ENCODE measurements at regions of chr18 and their contacts with region 1.

Region 1: GRCh38 chr18:50356036-50356945 is 18.6 kb upstream of the SKA1 start:
- DNase-seq: no peak
- H3K4me3 ChIP-seq: no peak overlapping the region
- H3K27ac ChIP-seq: no peak overlapping the region
- H3K27me3 ChIP-seq: peaks cover 2% of the 10 kb centered on the region
- CTCF ChIP-seq: no peak

Region 2: GRCh38 chr18:50203801-50204604 is 152.3 kb before region 1 on chr18:
- CTCF ChIA-PET with region 1: interaction called, 14 read pairs
- POLR2A ChIA-PET with region 1: no interaction called
- DNase-seq: no peak
- H3K4me3 ChIP-seq: no peak overlapping the region
- H3K27ac ChIP-seq: no peak overlapping the region
- H3K27me3 ChIP-seq: peaks cover 5% of the 10 kb centered on the region
- CTCF ChIP-seq: peak; percentile 55

Region 3: DNA sequence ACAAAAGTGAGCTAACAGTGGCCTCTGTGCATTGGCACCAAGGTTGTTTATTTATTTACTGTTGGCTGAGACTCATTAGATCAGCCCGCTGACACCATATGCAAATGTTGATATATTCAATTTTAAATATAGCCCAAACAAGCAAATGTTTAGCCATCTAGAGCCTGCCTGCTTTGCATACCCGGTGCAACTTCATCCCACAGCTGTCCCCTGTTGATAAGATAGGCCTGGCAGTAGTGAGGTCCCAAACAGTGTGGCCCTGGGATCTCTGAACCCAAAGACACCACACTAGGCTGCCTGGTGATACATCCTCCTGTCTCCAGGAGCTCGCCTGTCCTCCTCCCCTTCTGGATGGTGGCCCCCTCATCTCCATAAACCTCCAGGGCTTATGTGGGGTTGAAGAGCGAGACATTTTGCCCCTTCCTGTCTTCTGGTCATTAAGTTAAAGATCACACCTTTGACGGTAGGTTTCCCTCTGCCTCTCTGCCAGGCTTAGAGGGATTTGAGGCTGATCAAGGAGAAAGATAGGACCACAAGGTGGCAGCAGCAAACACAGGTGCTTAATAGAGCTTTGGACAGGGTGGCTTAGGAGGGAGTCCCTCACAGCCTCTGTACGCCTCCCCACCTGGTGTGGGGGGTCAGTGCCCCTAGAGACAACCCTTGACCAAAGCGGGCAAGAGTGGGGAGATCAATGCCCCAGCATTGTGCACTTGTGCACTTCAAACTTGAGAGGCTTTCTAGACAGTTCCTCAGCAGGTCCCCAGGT is 137.7 kb before region 1 on chr18:
- CTCF ChIA-PET with region 1: interaction called, 23 read pairs
- POLR2A ChIA-PET with region 1: no interaction called
- DNase-seq: no peak
- H3K4me3 ChIP-seq: no peak overlapping the region
- H3K27ac ChIP-seq: no peak overlapping the region
- H3K27me3 ChIP-seq: peaks cover 4% of the 10 kb centered on the region
- CTCF ChIP-seq: peak; percentile 35

Region 4: GRCh38 chr18:50307738-50308470 is 48.4 kb before region 1 on chr18:
- CTCF ChIA-PET with region 1: interaction called, 12 read pairs
- POLR2A ChIA-PET with region 1: no interaction called
- DNase-seq: peak; percentile 67
- H3K4me3 ChIP-seq: peak overlapping the region; percentile 70
- H3K27ac ChIP-seq: no peak overlapping the region
- H3K27me3 ChIP-seq: no peaks in the 10 kb centered on the region
- CTCF ChIP-seq: no peak

Region 5: GRCh38 chr18:50340078-50340477 is 16.2 kb before region 1 on chr18:
- CTCF ChIA-PET with region 1: interaction called, 21 read pairs
- POLR2A ChIA-PET with region 1: no interaction called
- DNase-seq: no peak
- H3K4me3 ChIP-seq: no peak overlapping the region
- H3K27ac ChIP-seq: no peak overlapping the region
- H3K27me3 ChIP-seq: peaks cover 9% of the 10 kb centered on the region
- CTCF ChIP-seq: no peak

Region 6: GRCh38 chr18:50374753-50375391 is 18.6 kb after region 1 on chr18 and contains the start of gene SKA1:
- CTCF ChIA-PET with region 1: interaction called, 69 read pairs
- POLR2A ChIA-PET with region 1: no interaction called
- DNase-seq: peak; percentile 79
- H3K4me3 ChIP-seq: peak within 1 kb of the TSS; percentile 81
- H3K27ac ChIP-seq: no peak within 1 kb of the TSS
- H3K27me3 ChIP-seq: no peaks in the 10 kb centered on the region
- CTCF ChIP-seq: no peak
- polyA plus RNA-seq, gene SKA1: 3.5 and 6.2 TPM in 2 replicates

Region 7: DNA sequence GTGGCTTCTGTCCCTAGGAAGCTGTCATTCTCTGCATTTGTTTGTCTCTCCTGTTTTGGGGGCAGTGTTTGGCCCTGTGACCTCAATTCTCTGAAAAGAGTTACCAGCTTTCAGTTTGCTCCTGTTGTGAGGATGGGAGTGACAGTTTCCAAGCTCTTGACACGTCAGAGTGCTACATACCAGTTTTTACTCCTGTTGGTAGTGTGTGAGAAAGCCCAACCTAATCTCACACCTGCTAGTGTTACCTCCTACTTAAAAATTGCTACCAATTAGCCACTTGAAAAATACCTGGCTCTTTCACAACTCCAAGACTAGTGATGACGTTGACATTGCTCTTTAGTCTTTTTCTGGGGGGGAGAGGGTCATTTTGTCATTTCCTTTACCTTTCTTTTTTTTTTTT is 32.7 kb after region 1 on chr18:
- CTCF ChIA-PET with region 1: interaction called, 20 read pairs
- POLR2A ChIA-PET with region 1: no interaction called
- DNase-seq: no peak
- H3K4me3 ChIP-seq: no peak overlapping the region
- H3K27ac ChIP-seq: no peak overlapping the region
- H3K27me3 ChIP-seq: no peaks in the 10 kb centered on the region
- CTCF ChIP-seq: no peak